HEK293 (cell line): ENCODE measurements at regions of chr19 and their contacts with region 1.

Region 1: DNA sequence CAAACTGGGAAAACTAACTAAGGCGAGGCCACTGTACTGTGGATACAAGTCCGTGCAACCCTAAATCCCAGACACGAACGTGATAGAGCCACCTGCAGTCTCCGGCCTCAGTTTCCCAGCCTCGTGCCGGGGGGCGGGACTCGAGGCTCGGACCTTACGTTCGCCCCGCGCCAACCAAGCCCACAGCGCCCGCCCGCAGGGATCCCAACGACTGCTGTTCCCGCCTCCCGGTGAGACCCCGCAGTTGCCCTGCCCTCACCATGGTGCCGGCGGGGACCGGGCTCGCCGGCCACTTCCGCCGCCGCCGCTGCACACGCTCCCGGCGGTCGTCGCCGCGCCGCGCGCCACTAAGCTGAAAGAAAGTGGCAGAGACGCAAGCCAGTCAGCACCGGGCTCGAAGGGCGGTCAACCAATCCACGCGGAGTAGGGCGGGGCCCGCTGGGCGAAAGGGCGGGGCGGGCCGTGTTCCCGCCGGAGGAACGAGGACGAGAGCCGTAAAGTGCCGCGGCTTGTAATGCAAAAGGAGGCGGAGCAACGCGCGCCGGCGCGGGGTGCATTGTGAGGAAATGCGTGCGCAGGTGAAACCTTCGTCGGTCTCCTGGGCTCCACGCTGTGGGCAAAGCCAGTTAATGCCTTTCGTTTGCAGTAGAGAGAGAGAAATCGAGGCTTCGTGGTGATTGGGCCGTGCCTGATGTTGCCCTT is at the start of gene LSM4:
- H3K4me3 ChIP-seq: peak within 1 kb of the TSS; percentile 92
- H3K27ac ChIP-seq: peak within 1 kb of the TSS; percentile 84
- H3K4me1 ChIP-seq: peaks cover 7% of the 10 kb centered on the region
- CTCF ChIP-seq: no peak

Region 2: DNA sequence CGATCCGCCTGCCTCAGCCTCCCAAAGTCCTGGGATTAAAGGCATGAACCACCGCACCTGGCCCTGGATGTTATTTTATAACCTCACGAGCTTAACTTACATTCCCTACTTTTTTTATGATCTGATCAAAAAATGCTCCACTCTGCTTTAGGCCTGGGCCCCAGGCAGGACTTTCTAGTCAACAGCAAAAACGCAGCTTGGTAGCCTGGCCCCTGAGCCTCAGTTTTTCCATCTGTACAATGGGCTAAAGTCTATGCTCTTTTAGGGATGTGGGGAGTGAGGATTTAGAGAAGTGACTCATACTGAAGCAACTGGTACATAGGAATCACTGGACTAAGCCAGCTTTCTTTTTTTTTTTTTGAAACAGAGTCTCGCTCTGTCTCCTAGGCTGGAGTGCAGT is 181.9 kb before region 1 on chr19:
- CTCF ChIA-PET with region 1: no interaction called
- POLR2A ChIA-PET with region 1: no interaction called
- H3K4me3 ChIP-seq: no peak overlapping the region
- H3K27ac ChIP-seq: no peak overlapping the region
- H3K4me1 ChIP-seq: no peaks in the 10 kb centered on the region
- CTCF ChIP-seq: no peak

Region 3: DNA sequence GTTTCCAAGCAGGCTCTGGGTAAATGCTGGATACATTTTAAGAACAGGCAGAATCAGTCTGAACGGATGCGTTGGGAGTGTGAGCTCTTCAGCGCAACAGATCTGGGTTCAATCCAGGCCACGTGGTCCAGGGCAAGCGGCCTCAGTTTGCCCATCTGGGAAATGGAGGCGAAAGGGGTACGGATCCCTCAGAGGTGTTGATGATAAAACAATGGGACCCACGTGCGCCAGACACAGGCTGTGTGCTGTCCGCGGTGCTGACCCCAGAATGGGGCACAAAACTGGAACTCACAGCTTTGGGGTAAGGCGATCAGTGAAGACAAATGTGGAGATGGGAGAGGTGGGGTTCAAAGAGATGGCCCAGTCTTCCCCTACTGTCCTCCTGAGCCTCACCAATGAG is 83.6 kb before region 1 on chr19:
- CTCF ChIA-PET with region 1: no interaction called
- POLR2A ChIA-PET with region 1: no interaction called
- H3K4me3 ChIP-seq: no peak overlapping the region
- H3K27ac ChIP-seq: no peak overlapping the region
- H3K4me1 ChIP-seq: no peaks in the 10 kb centered on the region
- CTCF ChIP-seq: no peak

Region 4: GRCh38 chr19:18304458-18305310 is 18.2 kb before region 1 on chr19:
- CTCF ChIA-PET with region 1: interaction called, 13 read pairs
- POLR2A ChIA-PET with region 1: interaction called, 15 read pairs
- H3K4me3 ChIP-seq: no peak overlapping the region
- H3K27ac ChIP-seq: no peak overlapping the region; the same call in 1 of the 2 replicates
- H3K4me1 ChIP-seq: peaks cover 5% of the 10 kb centered on the region; the same call in 1 of the 2 replicates
- CTCF ChIP-seq: peak; percentile 46; the same call in 1 of the 2 replicates

Region 5: GRCh38 chr19:18364826-18365528 is 42.1 kb after region 1 on chr19:
- CTCF ChIA-PET with region 1: no interaction called
- POLR2A ChIA-PET with region 1: no interaction called
- H3K4me3 ChIP-seq: no peak overlapping the region
- H3K27ac ChIP-seq: peak overlapping the region; percentile 94
- H3K4me1 ChIP-seq: no peaks in the 10 kb centered on the region; the same call in 1 of the 2 replicates
- CTCF ChIP-seq: no peak